Naive thymus-derived CD4-positive, alpha-beta T cell (primary cell): ENCODE measurements at regions of chr14 and their contacts with region 1.

Region 1: GRCh38 chr14:106642090-106642489 is 1115.7 kb downstream of the TMEM121 start:
- DNase-seq: no peak
- ATAC-seq: no peak
- H3K4me3 ChIP-seq: no peak overlapping the region
- H3K4me3 Mint-ChIP-seq: no peak overlapping the region
- H3K27ac ChIP-seq: no peak overlapping the region
- H3K27ac Mint-ChIP-seq: no peak overlapping the region
- H3K4me1 ChIP-seq: no peaks in the 10 kb centered on the region
- H3K4me1 Mint-ChIP-seq: peaks cover 0 to 6% (median 4%) of the 10 kb centered on the region in 7 donors
- H3K27me3 ChIP-seq: no peaks in the 10 kb centered on the region
- H3K27me3 Mint-ChIP-seq: peaks cover 0 to 21% (median 3%) of the 10 kb centered on the region in 5 donors

Region 2: GRCh38 chr14:106442857-106443256 is 199.2 kb before region 1 on chr14:
- CTCF ChIA-PET with region 1: no interaction called
- POLR2A ChIA-PET with region 1: no interaction called
- intact Hi-C with region 1: no loop called
- DNase-seq: peak in 8 of 9 donors; percentile 16 to 59 (median 40)
- ATAC-seq: peak; percentile 84
- H3K4me3 ChIP-seq: no peak overlapping the region
- H3K4me3 Mint-ChIP-seq: peak overlapping the region in 3 of 10 donors; percentile 7 to 33 (median 8)
- H3K27ac ChIP-seq: no peak overlapping the region
- H3K27ac Mint-ChIP-seq: no peak overlapping the region
- H3K4me1 ChIP-seq: no peaks in the 10 kb centered on the region
- H3K4me1 Mint-ChIP-seq: peaks cover 0 to 7% (median 0%) of the 10 kb centered on the region in 7 donors
- H3K27me3 ChIP-seq: no peaks in the 10 kb centered on the region
- H3K27me3 Mint-ChIP-seq: peaks cover 6 to 53% (median 22%) of the 10 kb centered on the region in 5 donors

Region 3: GRCh38 chr14:106631879-106632278 is 10.2 kb before region 1 on chr14:
- CTCF ChIA-PET with region 1: no interaction called
- POLR2A ChIA-PET with region 1: no interaction called
- intact Hi-C with region 1: loop called in 1 of 2 experiments (anchors 1 kb)
- DNase-seq: no peak
- ATAC-seq: no peak
- H3K4me3 ChIP-seq: no peak overlapping the region
- H3K4me3 Mint-ChIP-seq: no peak overlapping the region
- H3K27ac ChIP-seq: no peak overlapping the region
- H3K27ac Mint-ChIP-seq: no peak overlapping the region
- H3K4me1 ChIP-seq: peaks cover 0 to 5% of the 10 kb centered on the region in 2 donors
- H3K4me1 Mint-ChIP-seq: peaks cover 0 to 7% (median 3%) of the 10 kb centered on the region in 7 donors
- H3K27me3 ChIP-seq: no peaks in the 10 kb centered on the region
- H3K27me3 Mint-ChIP-seq: peaks cover 4 to 48% (median 11%) of the 10 kb centered on the region in 5 donors